PC-9 (cell line): ENCODE measurements at regions of chr9 and their contacts with region 1.

Region 1: DNA sequence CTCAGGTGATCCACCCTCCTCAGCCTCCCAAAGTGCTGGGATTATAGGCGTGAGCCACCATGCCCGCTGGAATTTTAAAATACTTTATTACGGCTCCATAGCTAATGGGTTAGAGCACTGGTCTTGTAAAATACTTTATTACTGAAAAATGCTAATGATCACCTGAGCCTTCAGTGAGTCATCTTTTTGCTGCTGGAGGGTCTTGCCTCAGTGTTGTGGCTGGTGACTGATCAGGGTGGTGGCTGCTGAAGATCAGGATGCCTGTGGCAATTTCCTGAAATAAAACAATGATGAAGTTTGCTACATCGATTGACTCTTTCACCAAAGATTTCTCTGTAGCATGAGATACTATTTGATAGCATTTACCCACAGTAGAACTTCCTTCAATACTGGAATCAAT is 26.0 kb upstream of the GNE start:
- DNase-seq: peak in 1 of 2 experiments; percentile 90
- H3K4me3 ChIP-seq: no peak overlapping the region
- H3K27ac ChIP-seq: peak overlapping the region; percentile 93
- H3K4me1 ChIP-seq: peaks cover 54% of the 10 kb centered on the region
- H3K27me3 ChIP-seq: no peaks in the 10 kb centered on the region
- CTCF ChIP-seq: no peak

Region 2: DNA sequence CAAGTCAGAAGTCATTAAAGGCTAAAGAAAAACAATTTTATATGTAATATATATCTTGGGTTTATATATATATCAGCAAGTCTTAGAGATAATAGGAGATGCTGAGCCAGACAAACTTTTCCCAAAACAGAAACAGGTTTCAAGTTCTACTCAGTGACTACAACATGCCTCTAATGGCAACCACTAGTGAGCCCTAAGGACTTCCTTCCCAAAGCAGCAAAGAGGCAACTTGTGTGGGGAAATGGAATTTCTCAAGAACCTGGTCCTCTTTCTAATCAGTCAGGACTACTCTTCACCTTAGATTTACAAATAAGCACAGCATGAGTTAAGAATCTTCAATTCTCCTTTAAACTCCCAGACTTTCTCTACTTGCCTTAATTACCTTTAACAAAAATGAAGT is 98.3 kb after region 1 on chr9:
- CTCF ChIA-PET with region 1: no interaction called
- POLR2A ChIA-PET with region 1: interaction called, 20 read pairs
- intact Hi-C with region 1: no loop called
- DNase-seq: no peak
- H3K4me3 ChIP-seq: no peak overlapping the region
- H3K27ac ChIP-seq: no peak overlapping the region
- H3K4me1 ChIP-seq: peaks cover 18% of the 10 kb centered on the region
- H3K27me3 ChIP-seq: no peaks in the 10 kb centered on the region
- CTCF ChIP-seq: no peak